ENCODE measurements at regions of chr5 and their contacts with region 1.

Region 1: GRCh38 chr5:178732281-178732680 is 1.8 kb upstream of the ZNF354A start:
- DNase-seq: no peak
- ATAC-seq: no peak
- H3K4me3 Mint-ChIP-seq: no peak overlapping the region
- H3K27ac Mint-ChIP-seq: no peak overlapping the region
- H3K4me1 Mint-ChIP-seq: peaks cover 10% of the 10 kb centered on the region
- H3K27me3 Mint-ChIP-seq: no peaks in the 10 kb centered on the region

Region 2: GRCh38 chr5:178683783-178684182 is 48.5 kb before region 1 on chr5:
- CTCF ChIA-PET with region 1: no interaction called
- POLR2A ChIA-PET with region 1: no interaction called
- intact Hi-C with region 1: no loop called
- DNase-seq: no peak
- ATAC-seq: no peak
- H3K4me3 Mint-ChIP-seq: no peak overlapping the region
- H3K27ac Mint-ChIP-seq: no peak overlapping the region
- H3K4me1 Mint-ChIP-seq: peaks cover 2% of the 10 kb centered on the region
- H3K27me3 Mint-ChIP-seq: peaks cover 4% of the 10 kb centered on the region

Region 3: DNA sequence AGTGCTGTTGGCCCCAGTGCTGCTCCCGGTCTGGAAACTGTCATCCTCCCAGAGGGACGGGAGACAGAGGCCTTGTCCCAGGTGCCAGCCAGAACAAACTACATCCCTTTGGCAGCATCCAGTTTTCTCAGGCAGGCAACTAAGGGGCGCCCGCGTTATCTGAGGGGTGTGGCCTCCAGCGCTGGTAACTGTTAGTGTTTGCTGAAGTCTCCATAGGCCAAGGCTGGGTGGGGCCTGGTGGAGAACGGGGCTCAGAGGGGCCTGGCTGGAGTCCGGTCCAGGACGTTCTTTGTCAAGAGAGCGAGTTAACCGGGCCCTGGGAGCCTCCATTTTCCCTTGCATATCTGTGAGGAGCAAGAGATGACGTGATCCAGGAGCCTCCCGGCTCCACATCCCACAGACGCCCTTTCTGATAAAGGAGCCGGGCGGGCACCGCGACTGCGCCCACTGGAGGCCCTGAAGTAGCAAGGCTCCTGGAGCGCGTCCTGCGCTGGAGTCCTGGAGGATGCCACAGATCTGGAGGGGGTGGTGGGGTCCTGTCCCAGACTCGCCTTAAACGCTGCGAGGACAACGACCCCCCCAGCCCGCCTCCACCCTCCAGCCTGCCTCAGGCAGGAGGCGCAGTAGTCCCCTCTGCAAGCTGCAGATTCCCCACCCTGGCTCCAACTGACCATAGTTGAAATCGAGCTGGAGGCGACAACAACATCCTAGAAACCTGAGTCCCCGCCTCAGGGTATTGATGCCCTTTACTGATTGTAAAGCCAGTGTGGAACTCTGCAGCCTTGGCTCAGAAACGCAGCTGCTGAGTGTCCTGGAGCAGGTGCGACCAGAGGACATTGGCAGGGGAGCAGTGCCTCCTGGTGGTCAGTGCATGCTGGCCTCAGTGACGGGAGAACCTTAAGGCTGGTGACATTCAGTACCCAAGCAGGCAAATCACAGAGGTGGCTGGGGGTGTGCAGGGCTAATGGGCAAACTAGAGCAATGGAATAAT is 106.7 kb after region 1 on chr5:
- CTCF ChIA-PET with region 1: no interaction called
- POLR2A ChIA-PET with region 1: no interaction called
- intact Hi-C with region 1: loop called in 1 of 2 experiments (anchors 1 kb)
- DNase-seq: peak; percentile 76
- ATAC-seq: peak; percentile 49
- H3K4me3 Mint-ChIP-seq: no peak overlapping the region
- H3K27ac Mint-ChIP-seq: no peak overlapping the region
- H3K4me1 Mint-ChIP-seq: no peaks in the 10 kb centered on the region
- H3K27me3 Mint-ChIP-seq: peaks cover 3% of the 10 kb centered on the region

Region 4: DNA sequence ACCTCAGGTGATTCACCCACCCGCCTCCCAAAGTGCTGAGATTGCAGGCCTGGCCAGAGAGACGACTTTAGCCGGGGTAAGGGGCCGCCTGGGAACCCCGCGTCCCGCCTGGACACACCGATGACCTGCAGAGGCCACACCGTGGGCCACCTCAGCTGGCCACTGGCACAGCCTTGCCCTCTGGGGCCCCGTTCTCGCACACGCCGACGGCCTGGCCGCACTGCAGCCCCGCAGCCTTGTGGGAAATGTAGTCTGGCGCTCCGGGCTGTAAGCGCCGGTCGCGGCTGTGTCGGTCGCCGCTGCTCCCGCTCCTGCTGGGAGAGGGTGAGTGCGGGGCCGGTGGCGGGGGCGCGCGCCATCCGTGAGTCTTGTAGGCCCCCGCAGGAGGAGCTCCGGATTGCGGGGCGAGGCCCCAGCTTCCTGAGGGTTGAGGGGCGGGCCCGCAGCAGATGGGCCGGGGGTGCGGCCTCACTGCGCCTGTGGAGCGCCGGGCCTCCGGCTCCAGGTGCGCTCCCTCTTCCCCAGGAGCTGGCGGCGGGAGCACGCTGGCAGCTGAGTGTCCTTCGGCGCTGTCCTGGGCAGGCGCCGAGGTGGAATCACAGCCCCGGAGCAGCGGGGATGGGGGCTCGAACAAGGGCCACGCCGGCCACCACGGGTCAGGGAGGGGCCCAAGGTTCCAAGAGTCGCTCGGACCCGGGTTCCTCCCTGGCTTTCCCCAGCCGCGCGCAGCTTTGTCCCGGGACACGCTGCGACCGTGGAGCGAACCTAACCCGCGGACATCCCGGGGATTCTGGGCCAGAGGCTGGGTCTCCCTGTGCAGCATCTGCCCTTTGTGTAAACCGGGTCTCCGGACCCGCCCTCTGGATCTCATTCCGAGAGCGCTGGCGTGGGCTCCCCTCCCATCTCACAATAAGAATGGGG is 163.6 kb after region 1 on chr5 and contains the start of gene ZFP2:
- CTCF ChIA-PET with region 1: no interaction called
- POLR2A ChIA-PET with region 1: no interaction called
- intact Hi-C with region 1: loop called in 1 of 2 experiments (anchors 1 kb)
- DNase-seq: peak; percentile 63
- ATAC-seq: peak; percentile 97
- H3K4me3 Mint-ChIP-seq: peak within 1 kb of the TSS; percentile 69
- H3K27ac Mint-ChIP-seq: peak within 1 kb of the TSS; percentile 51
- H3K4me1 Mint-ChIP-seq: no peaks in the 10 kb centered on the region
- H3K27me3 Mint-ChIP-seq: no peaks in the 10 kb centered on the region
- total RNA-seq, gene ZFP2: 0.37 to 0.85 TPM

Region 5: GRCh38 chr5:179060116-179061008 is 328.1 kb after region 1 on chr5 and contains the start of gene ZNF354C:
- CTCF ChIA-PET with region 1: interaction called, 10 read pairs
- POLR2A ChIA-PET with region 1: interaction called, 7 read pairs
- intact Hi-C with region 1: loop called in 1 of 2 experiments (anchors 1 kb)
- DNase-seq: peak; percentile 93
- ATAC-seq: peak; percentile 99
- H3K4me3 Mint-ChIP-seq: peak within 1 kb of the TSS; percentile 81
- H3K27ac Mint-ChIP-seq: peak within 1 kb of the TSS; percentile 90
- H3K4me1 Mint-ChIP-seq: peaks cover 16% of the 10 kb centered on the region
- H3K27me3 Mint-ChIP-seq: no peaks in the 10 kb centered on the region
- total RNA-seq, gene ZNF354C: 7.1 to 7.2 TPM

Region 6: GRCh38 chr5:179495906-179496455 is 763.7 kb after region 1 on chr5:
- CTCF ChIA-PET with region 1: no interaction called
- POLR2A ChIA-PET with region 1: no interaction called
- intact Hi-C with region 1: loop called in 1 of 2 experiments (anchors 1 kb)
- DNase-seq: no peak
- ATAC-seq: no peak
- H3K4me3 Mint-ChIP-seq: no peak overlapping the region
- H3K27ac Mint-ChIP-seq: no peak overlapping the region
- H3K4me1 Mint-ChIP-seq: no peaks in the 10 kb centered on the region
- H3K27me3 Mint-ChIP-seq: peaks cover 4% of the 10 kb centered on the region